HEK293 (cell line): ENCODE measurements at regions of chrX and their contacts with region 1.

Region 1: GRCh38 chrX:17072721-17073230 is 126.3 kb downstream of the REPS2 start:
- H3K4me3 ChIP-seq: no peak overlapping the region
- H3K27ac ChIP-seq: no peak overlapping the region
- H3K4me1 ChIP-seq: no peaks in the 10 kb centered on the region
- CTCF ChIP-seq: no peak

Region 2: GRCh38 chrX:17053502-17053901 is 19.3 kb before region 1 on chrX:
- CTCF ChIA-PET with region 1: no interaction called
- POLR2A ChIA-PET with region 1: no interaction called
- H3K4me3 ChIP-seq: no peak overlapping the region
- H3K27ac ChIP-seq: no peak overlapping the region
- H3K4me1 ChIP-seq: no peaks in the 10 kb centered on the region
- CTCF ChIP-seq: no peak

Region 3: DNA sequence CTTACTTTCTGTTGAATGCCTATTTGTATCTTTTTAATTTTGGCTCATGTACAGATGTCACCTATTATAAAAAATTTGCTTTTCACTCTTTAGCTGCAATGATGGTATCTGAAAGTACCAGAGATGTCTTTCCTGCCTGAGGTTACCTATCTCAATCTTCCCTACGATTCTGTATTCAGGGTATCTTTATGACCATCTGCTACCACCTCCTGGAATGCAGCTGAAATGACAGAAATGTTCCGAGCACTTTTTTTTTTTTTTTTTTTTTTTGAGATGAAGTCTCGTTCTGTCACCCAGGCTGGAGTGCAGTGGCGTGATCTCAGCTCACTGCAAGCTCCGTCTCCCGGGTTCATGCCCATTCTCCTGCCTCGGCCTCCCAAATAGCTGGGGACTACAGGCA is 10.1 kb after region 1 on chrX:
- CTCF ChIA-PET with region 1: interaction called, 11 read pairs
- POLR2A ChIA-PET with region 1: no interaction called
- H3K4me3 ChIP-seq: no peak overlapping the region
- H3K27ac ChIP-seq: no peak overlapping the region
- H3K4me1 ChIP-seq: no peaks in the 10 kb centered on the region
- CTCF ChIP-seq: peak; percentile 43; the same call in 1 of the 2 replicates